Adrenal gland (tissue), 19 donors: ENCODE measurements at regions of chr18 and their contacts with region 1.

Region 1: GRCh38 chr18:3500016-3500415 is 50.0 kb downstream of the TGIF1 start:
- DNase-seq: peak in 5 of 7 donors; percentile 23 to 36 (median 33)
- H3K4me3 ChIP-seq: peak overlapping the region in 1 of 4 donors; percentile 49
- H3K27ac ChIP-seq: peak overlapping the region in 3 of 5 donors; percentile 36 to 81 (median 44)
- H3K4me1 ChIP-seq: peaks cover 14 to 27% of the 10 kb centered on the region in 2 donors
- H3K27me3 ChIP-seq: no peaks in the 10 kb centered on the region
- CTCF ChIP-seq: no peak
- POLR2A ChIP-seq: peak in 1 of 2 donors; percentile 21

Region 2: GRCh38 chr18:3579701-3580100 is 79.7 kb after region 1 on chr18:
- intact Hi-C with region 1: loop called in 1 of 2 experiments (anchors 5 kb)
- DNase-seq: no peak
- H3K4me3 ChIP-seq: no peak overlapping the region
- H3K27ac ChIP-seq: no peak overlapping the region
- H3K4me1 ChIP-seq: peaks cover 3 to 7% of the 10 kb centered on the region in 2 donors
- H3K27me3 ChIP-seq: no peaks in the 10 kb centered on the region
- CTCF ChIP-seq: no peak
- POLR2A ChIP-seq: no peak